Mucosa of descending colon (tissue), 3 donors: ENCODE measurements at regions of chr10 and their contacts with region 1.

Region 1: DNA sequence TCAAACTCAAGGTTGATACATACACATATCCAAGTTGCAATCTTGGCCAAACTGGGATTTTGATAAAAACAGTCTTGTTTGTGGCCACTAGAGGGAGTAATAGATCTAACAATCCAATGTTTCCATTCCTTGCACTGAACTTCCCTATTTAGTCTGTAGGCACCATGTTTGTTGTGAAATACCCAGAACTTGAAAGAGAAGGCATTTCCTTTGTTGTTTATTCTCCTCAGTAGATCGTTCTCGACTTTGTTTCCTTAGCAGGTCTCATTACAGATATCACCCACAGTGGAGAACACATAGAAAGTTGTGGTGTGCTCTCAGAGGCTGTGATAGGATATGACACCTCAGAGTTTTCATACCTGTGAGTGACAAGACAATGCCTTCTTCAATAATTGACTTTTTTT is 70.3 kb upstream of the MXI1 start:
- DNase-seq: no peak
- ATAC-seq: peak; percentile 82
- H3K4me3 ChIP-seq: no peak overlapping the region
- H3K4me1 ChIP-seq: peaks cover 20% of the 10 kb centered on the region
- CTCF ChIP-seq: no peak

Region 2: GRCh38 chr10:109883859-109884771 is 253.0 kb before region 1 on chr10:
- intact Hi-C with region 1: loop called in 1 of 2 experiments (anchors 10 kb)
- DNase-seq: peak; percentile 52 to 72 (median 59)
- ATAC-seq: peak; percentile 95
- H3K4me3 ChIP-seq: no peak overlapping the region
- H3K4me1 ChIP-seq: peaks cover 4% of the 10 kb centered on the region
- CTCF ChIP-seq: peak; percentile 83

Region 3: GRCh38 chr10:110192552-110192951 is 55.4 kb after region 1 on chr10:
- intact Hi-C with region 1: loop called in 1 of 2 experiments (anchors 10 kb)
- DNase-seq: no peak
- ATAC-seq: no peak
- H3K4me3 ChIP-seq: no peak overlapping the region
- H3K4me1 ChIP-seq: no peaks in the 10 kb centered on the region
- CTCF ChIP-seq: no peak

Region 4: DNA sequence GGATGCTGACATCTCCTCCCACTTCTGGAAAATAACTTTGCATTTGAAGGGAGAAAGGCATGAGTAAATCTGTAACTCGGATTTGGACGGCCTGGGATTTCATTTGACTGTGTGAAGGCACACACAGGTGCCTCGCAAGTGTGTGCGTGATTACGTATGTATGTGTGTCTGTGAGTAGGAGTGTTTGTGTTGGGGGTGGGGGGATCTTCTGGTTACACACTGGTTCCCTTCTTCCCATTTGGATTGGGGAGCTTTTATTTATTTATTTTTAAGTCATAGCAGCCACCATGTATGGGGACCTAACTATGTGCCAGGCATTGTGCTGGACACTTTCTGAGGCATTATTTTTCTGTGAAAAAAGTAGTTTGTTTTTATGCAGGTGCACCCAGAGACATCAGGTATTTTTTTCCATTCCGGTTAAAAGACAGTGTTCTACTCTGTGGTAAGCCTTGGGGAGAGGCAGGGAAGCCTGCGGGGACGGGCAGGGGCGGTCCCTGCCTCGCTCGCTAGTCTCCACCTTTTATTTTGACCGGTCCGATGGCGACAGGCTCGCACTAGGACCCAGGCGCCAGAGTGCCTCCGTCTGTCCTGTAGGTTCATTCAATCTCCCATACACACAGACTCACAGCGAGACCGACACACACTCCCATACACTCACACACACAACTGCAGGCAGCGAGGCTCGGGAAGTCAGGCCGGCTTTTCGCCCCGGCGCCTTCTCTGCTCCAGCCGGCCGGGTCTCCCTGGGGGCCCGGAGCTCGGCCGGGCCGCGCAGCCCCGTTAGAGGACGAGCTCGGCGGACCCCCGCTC is 70.1 kb after region 1 on chr10 and contains the start of gene MXI1:
- intact Hi-C with region 1: loop called in 1 of 2 experiments (anchors 5 kb)
- DNase-seq: peak; percentile 87 to 92 (median 90)
- ATAC-seq: peak; percentile 50
- H3K4me3 ChIP-seq: peak within 1 kb of the TSS; percentile 28
- H3K4me1 ChIP-seq: peaks cover 29% of the 10 kb centered on the region
- CTCF ChIP-seq: no peak
- total RNA-seq, gene MXI1: 112 to 144 (median 139) TPM

Region 5: DNA sequence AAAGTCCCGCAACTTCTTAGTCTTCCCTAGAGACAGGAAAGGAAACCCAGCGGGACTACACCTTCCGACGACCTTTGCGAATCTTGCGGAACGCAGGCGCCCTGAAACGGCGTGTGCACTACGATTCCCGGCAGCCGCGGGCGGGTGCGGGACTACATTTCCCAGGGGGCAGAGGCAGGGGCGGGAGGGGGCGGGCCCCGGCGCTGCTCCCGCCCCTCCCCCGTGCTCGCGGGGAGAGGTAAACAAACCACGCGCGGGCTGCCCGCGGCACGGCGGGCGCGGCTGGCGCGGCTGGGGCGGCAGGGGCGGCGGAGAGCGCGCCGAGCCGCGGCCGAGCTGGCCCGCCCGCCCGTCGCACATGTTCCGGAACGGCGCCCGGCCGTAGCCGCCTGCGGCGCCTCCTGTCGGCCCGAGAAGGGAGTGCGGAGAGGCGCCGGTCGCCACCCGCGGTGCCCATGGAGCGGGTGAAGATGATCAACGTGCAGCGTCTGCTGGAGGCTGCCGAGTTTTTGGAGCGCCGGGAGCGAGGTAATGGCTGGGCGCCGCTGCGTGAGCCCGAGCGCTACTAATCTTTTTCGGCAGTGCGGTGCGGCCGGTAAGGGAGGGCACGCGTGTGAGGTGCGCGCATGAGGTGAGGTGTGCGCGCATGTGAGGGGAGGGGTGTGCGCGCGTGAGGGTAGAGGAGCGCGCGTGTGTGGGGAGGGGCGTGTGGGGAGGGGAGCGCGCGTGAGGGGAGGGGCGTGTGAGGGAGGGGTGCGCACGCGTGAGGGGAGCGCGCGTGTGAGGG is 88.8 kb after region 1 on chr10:
- intact Hi-C with region 1: loop called in 1 of 2 experiments (anchors 5 kb)
- DNase-seq: peak; percentile 92 to 95 (median 93)
- ATAC-seq: peak; percentile 71
- H3K4me3 ChIP-seq: peak overlapping the region; percentile 24
- H3K4me1 ChIP-seq: peaks cover 25% of the 10 kb centered on the region
- CTCF ChIP-seq: peak; percentile 79

Region 6: DNA sequence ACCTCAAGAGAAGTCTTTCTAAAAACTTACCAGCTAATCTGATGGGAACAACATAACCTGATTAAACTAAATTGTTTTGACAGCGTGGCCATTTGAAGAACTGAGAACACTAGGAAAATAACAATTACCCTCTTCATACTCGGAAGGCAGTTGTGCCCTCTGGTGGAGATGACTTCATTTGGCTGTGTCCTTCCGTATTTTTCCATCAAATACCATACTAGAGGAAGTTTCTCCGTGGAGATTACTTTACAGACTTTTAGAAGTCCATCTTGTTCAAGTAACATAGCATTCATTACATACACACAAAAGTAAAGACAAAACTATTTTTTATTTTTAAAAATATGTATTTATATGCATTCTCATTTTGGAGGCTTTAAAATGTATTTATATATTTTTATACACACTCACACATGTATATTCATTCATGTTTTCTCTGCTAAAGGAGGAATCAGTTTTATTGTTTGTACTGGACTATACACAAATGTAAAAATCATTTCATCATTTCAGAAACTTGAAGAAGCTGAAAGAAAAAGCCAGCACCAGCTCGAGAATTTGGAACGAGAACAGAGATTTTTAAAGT is 142.4 kb after region 1 on chr10:
- intact Hi-C with region 1: loop called (anchors 5 kb)
- DNase-seq: peak in 1 of 3 donors; percentile 83
- ATAC-seq: peak; percentile 86
- H3K4me3 ChIP-seq: no peak overlapping the region
- H3K4me1 ChIP-seq: peaks cover 4% of the 10 kb centered on the region
- CTCF ChIP-seq: peak; percentile 29

Region 7: GRCh38 chr10:110311357-110311949 is 174.3 kb after region 1 on chr10:
- intact Hi-C with region 1: no loop called
- DNase-seq: peak in 2 of 3 donors; percentile 37 to 80
- ATAC-seq: peak; percentile 74
- H3K4me3 ChIP-seq: no peak overlapping the region
- H3K4me1 ChIP-seq: no peaks in the 10 kb centered on the region
- CTCF ChIP-seq: peak; percentile 13